ENCODE measurements at regions of chr4 and their contacts with region 1.

Region 1: DNA sequence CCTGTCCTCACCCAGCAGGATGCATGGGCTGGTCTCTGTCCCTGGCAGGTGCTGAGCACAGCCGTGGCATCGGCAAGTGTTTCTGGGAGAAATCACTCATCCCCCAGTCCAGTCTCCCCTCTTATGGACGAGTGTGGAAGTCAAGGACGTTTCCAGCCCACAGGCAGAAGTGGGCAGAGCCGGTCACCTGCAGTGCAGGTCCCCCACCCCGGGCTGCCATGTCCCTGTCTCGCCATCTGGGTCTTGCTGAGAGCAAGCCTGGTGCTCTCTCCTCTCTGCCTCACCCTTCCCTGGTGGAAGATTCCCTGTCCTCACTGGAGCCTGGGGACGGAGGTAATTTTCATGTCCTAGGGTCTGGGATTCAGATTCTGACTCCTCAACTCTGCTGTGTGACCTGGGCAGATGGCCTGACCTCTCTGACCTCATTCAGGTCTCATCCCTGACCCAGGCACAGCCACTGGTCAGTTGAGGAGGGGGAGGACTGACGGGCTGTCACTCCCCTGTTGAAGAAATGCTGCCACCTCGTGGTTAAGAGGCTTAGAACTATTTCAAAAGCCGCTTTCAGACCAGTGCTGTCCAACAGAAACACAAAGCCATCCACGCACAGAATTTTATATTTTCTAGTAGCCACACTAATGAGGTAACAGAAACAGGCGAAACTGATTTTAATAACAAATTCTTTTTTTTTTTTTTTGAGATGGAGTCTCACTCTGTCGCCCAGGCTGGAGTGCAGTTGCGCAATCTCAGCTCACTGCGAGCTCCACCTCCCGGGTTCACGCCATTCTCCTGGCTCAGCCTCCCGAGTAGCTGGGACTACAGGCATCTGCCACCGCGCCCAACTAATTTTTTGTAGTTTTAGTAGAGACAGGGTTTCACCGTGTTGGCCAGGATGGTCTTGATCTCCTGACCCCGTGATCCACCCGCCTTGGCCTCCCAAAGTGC is 1.8 kb downstream of the CPZ start:
- DNase-seq: peak; percentile 44
- H3K4me3 ChIP-seq: no peak overlapping the region
- H3K27ac ChIP-seq: no peak overlapping the region
- H3K4me1 ChIP-seq: no peaks in the 10 kb centered on the region
- CTCF ChIP-seq: peak; percentile 80

Region 2: GRCh38 chr4:8241895-8242696 is 352.3 kb before region 1 on chr4:
- CTCF ChIA-PET with region 1: no interaction called
- POLR2A ChIA-PET with region 1: no interaction called
- intact Hi-C with region 1: loop called (anchors 1 kb)
- DNase-seq: peak; percentile 77
- H3K4me3 ChIP-seq: no peak overlapping the region
- H3K27ac ChIP-seq: no peak overlapping the region
- H3K4me1 ChIP-seq: peaks cover 10% of the 10 kb centered on the region
- CTCF ChIP-seq: peak; percentile 89

Region 3: GRCh38 chr4:8468746-8469535 is 125.4 kb before region 1 on chr4:
- CTCF ChIA-PET with region 1: no interaction called
- POLR2A ChIA-PET with region 1: no interaction called
- intact Hi-C with region 1: loop called (anchors 1 kb)
- DNase-seq: peak; percentile 61
- H3K4me3 ChIP-seq: no peak overlapping the region
- H3K27ac ChIP-seq: no peak overlapping the region
- H3K4me1 ChIP-seq: no peaks in the 10 kb centered on the region
- CTCF ChIP-seq: peak; percentile 95

Measured in OCI-LY7 (cell line).